ENCODE measurements at regions of chr11 and their contacts with region 1.

Region 1: GRCh38 chr11:6667733-6668374 is 12.2 kb upstream of the DCHS1 start:
- DNase-seq: no peak
- CTCF ChIP-seq: no peak

Region 2: DNA sequence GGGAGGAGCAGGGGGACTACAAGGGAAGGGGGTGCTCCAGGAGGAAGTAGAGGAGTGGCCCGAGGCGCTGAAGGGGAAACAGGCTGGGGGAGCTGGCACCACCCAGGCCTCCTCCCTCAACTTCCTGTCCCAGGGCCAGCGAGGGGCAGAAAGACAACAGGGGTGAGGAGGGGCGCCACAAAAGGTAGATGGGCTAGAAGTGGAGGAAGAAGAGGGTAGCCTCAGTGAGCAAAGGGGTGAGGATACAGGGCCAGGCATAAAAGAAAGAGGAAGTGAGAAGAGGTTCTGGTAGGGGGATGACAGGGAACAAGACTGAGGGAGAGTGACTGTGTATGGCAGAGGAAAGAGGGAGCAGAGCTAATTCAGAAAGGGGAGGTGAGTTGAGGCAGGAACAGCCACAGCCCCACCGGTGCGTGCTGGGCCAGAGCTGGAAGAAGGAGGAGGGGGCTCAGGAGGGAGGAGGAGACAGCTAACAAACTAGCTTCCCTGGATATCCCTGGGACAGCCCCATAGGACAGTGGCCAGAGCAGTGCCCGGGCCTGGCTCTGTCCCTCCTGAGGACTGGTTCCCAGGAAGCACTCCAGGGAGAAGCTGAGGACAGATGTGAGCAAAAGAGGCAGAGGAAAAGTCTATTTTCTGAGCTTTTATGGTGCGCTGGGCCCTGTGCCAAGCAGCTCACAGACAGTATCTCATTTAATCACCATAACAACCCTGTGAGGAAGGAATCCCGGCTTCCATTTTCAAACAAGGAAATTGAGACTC is 20.8 kb before region 1 on chr11:
- CTCF ChIA-PET with region 1: interaction called, 23 read pairs
- POLR2A ChIA-PET with region 1: interaction called, 6 read pairs
- DNase-seq: peak; percentile 81
- CTCF ChIP-seq: no peak

Measured in GM10248 (cell line).